Naive thymus-derived CD4-positive, alpha-beta T cell (primary cell): ENCODE measurements at regions of chr5 and their contacts with region 1.

Region 1: GRCh38 chr5:146213210-146213826 is 9.9 kb downstream of the RBM27 start:
- DNase-seq: peak in 1 of 9 donors; percentile 18
- ATAC-seq: no peak
- H3K4me3 ChIP-seq: no peak overlapping the region
- H3K4me3 Mint-ChIP-seq: peak overlapping the region in 6 of 10 donors; percentile 19 to 56 (median 42)
- H3K27ac ChIP-seq: no peak overlapping the region
- H3K27ac Mint-ChIP-seq: no peak overlapping the region
- H3K4me1 ChIP-seq: peaks cover 13 to 21% of the 10 kb centered on the region in 2 donors
- H3K4me1 Mint-ChIP-seq: peaks cover 31 to 78% (median 59%) of the 10 kb centered on the region in 7 donors
- H3K27me3 ChIP-seq: no peaks in the 10 kb centered on the region
- H3K27me3 Mint-ChIP-seq: no peaks in the 10 kb centered on the region

Region 2: GRCh38 chr5:145408048-145408341 is 805.3 kb before region 1 on chr5:
- CTCF ChIA-PET with region 1: no interaction called
- POLR2A ChIA-PET with region 1: no interaction called
- intact Hi-C with region 1: no loop called
- DNase-seq: no peak
- ATAC-seq: no peak
- H3K4me3 ChIP-seq: no peak overlapping the region
- H3K4me3 Mint-ChIP-seq: no peak overlapping the region
- H3K27ac ChIP-seq: no peak overlapping the region
- H3K27ac Mint-ChIP-seq: no peak overlapping the region
- H3K4me1 ChIP-seq: no peaks in the 10 kb centered on the region
- H3K4me1 Mint-ChIP-seq: no peaks in the 10 kb centered on the region
- H3K27me3 ChIP-seq: no peaks in the 10 kb centered on the region
- H3K27me3 Mint-ChIP-seq: no peaks in the 10 kb centered on the region

Region 3: GRCh38 chr5:146249801-146250200 is 36.5 kb after region 1 on chr5:
- CTCF ChIA-PET with region 1: no interaction called
- POLR2A ChIA-PET with region 1: no interaction called
- intact Hi-C with region 1: loop called in 1 of 2 experiments (anchors 5 kb)
- DNase-seq: no peak
- ATAC-seq: no peak
- H3K4me3 ChIP-seq: no peak overlapping the region
- H3K4me3 Mint-ChIP-seq: no peak overlapping the region
- H3K27ac ChIP-seq: no peak overlapping the region
- H3K27ac Mint-ChIP-seq: no peak overlapping the region
- H3K4me1 ChIP-seq: no peaks in the 10 kb centered on the region
- H3K4me1 Mint-ChIP-seq: peaks cover 5 to 20% (median 6%) of the 10 kb centered on the region in 7 donors
- H3K27me3 ChIP-seq: no peaks in the 10 kb centered on the region
- H3K27me3 Mint-ChIP-seq: no peaks in the 10 kb centered on the region